ENCODE measurements at regions of chr9 and their contacts with region 1.

Region 1: DNA sequence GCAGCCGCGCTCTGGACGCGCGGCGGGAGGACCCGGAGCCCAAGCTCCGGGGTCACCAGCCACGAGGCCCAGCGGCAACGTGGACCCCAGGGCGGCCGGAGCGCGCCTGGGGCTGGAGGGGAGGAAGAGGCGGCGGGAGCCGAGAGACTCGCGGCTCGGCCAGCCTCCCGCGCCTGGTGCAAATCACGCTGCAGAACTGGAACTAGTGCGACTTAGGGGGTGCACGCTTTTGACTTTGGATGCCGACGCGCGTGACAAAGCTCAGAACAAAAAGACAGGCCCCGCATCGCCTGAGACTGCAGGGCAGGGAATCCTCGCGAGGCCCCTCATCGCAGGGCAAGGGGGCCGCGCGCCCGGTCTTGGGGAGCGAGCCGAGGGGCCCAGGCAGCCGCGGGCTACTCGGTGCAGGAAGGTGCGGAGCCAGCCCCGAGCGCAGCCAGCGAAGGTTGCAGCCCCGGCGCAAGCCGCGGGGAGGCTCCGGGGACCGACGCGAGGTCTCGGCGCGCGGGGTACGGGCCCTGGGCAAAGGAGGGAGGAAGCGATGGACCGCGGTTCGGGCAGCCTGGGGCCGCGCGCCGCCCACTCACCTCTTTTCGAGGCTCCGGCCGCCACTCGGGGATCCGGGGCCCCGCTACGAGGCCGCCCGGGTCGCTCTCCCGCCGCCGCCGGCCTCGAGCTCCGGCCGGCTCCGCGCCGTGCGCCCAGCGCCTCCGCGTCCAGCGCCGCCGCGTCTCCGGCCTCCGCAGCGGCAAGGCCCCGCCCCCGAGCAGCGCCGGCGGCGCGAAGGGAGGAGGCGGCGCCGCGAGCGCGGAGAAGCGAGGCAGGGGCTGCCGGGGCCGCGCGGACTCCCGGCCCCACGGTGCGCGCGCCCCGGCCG is at the start of gene GOLM1:
- DNase-seq: peak in 1 of 2 experiments; percentile 77
- H3K4me3 ChIP-seq: peak within 1 kb of the TSS; percentile 85
- H3K27ac ChIP-seq: peak within 1 kb of the TSS; percentile 22; the same call in 1 of the 2 replicates
- H3K4me1 ChIP-seq: peaks cover 44% of the 10 kb centered on the region
- H3K27me3 ChIP-seq: no peaks in the 10 kb centered on the region
- CTCF ChIP-seq: 0 out of 2 replicates have a peak, but pooled peaks have one; percentile 18
- total RNA-seq, gene GOLM1: 92.5 and 94.7 TPM in 2 replicates

Region 2: DNA sequence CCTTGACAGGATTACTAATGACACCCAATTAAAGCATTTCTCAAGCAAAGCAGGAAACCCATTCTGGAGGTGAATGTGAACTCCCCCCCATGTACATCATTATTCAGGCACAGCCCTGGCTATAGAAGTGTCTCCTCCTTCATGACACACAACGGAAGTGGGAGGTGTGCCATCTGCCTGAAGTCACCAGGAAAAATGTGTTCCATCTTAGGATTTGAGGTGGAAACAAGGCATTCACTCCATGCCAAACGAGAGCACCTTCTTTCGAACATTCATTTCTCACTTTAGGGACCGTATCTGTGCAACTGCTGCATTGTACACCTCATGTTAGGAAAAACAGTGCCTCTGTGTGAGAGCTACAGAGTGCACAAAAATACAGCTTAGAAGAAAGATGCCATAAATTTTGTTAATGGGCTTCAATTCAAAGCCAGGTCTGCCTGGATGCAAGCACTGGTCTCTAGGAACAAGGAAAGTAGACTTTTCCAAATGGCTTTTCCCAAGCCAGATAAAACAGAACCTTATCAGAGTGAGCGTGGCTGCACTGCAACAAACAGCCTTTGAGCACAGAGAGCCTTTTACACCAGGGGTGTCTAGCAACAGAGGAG is 19.1 kb before region 1 on chr9:
- CTCF ChIA-PET with region 1: no interaction called
- POLR2A ChIA-PET with region 1: no interaction called
- intact Hi-C with region 1: loop called (anchors 1 kb)
- DNase-seq: peak in 1 of 2 experiments; percentile 49
- H3K4me3 ChIP-seq: peak overlapping the region; percentile 32; the same call in 1 of the 2 replicates
- H3K27ac ChIP-seq: peak overlapping the region; percentile 95
- H3K4me1 ChIP-seq: peaks cover 29% of the 10 kb centered on the region
- H3K27me3 ChIP-seq: no peaks in the 10 kb centered on the region
- CTCF ChIP-seq: no peak

Region 3: GRCh38 chr9:86126998-86127972 is 28.2 kb after region 1 on chr9:
- CTCF ChIA-PET with region 1: no interaction called
- POLR2A ChIA-PET with region 1: interaction called, 7 read pairs
- intact Hi-C with region 1: loop called (anchors 2 kb)
- DNase-seq: peak; percentile 97 to 99
- H3K4me3 ChIP-seq: peak overlapping the region; percentile 30; the same call in 1 of the 2 replicates
- H3K27ac ChIP-seq: peak overlapping the region; percentile 87
- H3K4me1 ChIP-seq: peaks cover 46% of the 10 kb centered on the region
- H3K27me3 ChIP-seq: no peaks in the 10 kb centered on the region
- CTCF ChIP-seq: no peak

Region 4: DNA sequence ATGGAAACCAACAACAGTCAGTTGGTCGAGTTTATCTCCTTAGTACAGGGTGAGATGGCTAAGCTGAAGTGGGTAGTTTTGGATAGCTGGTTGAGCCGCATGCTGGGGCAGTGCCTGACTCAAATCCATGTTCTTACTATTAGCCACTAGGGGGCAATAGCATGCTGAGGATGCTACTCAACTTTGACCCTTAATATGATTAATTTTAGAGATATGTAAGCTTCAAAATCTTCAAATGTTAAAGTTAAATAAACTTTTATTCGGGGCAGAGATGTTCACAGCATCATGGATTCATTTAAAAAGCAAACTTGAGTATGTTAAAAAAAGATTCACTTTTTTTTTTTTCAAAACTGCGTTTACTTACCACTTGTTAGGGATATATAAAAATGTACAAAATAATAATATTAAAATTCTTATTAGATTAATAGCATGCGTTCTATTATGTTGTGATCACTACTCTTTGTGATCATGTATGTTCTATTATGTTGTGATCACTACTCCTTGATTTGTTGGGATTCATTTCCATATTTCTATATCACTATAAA is 103.3 kb after region 1 on chr9:
- CTCF ChIA-PET with region 1: no interaction called
- POLR2A ChIA-PET with region 1: no interaction called
- intact Hi-C with region 1: loop called (anchors 5 kb)
- DNase-seq: peak; percentile 18 to 52
- H3K4me3 ChIP-seq: no peak overlapping the region
- H3K27ac ChIP-seq: no peak overlapping the region
- H3K4me1 ChIP-seq: no peaks in the 10 kb centered on the region
- H3K27me3 ChIP-seq: no peaks in the 10 kb centered on the region
- CTCF ChIP-seq: peak; percentile 86